ENCODE measurements at regions of chr3 and their contacts with region 1.

Region 1: GRCh38 chr3:99817437-99818240 is at the start of gene CMSS1:
- DNase-seq: peak; percentile 95
- H3K4me3 Mint-ChIP-seq: peak within 1 kb of the TSS; percentile 98
- H3K27ac Mint-ChIP-seq: peak within 1 kb of the TSS; percentile 98
- H3K4me1 Mint-ChIP-seq: peaks cover 39% of the 10 kb centered on the region
- H3K27me3 Mint-ChIP-seq: no peaks in the 10 kb centered on the region
- total RNA-seq, gene CMSS1: 95.8 to 106 TPM

Region 2: GRCh38 chr3:99875929-99876841 is 58.5 kb after region 1 on chr3:
- CTCF ChIA-PET with region 1: no interaction called
- intact Hi-C with region 1: loop called (anchors 2 kb)
- DNase-seq: peak; percentile 67
- H3K4me3 Mint-ChIP-seq: peak overlapping the region; percentile 65
- H3K27ac Mint-ChIP-seq: no peak overlapping the region
- H3K4me1 Mint-ChIP-seq: peaks cover 13% of the 10 kb centered on the region
- H3K27me3 Mint-ChIP-seq: no peaks in the 10 kb centered on the region

Region 3: DNA sequence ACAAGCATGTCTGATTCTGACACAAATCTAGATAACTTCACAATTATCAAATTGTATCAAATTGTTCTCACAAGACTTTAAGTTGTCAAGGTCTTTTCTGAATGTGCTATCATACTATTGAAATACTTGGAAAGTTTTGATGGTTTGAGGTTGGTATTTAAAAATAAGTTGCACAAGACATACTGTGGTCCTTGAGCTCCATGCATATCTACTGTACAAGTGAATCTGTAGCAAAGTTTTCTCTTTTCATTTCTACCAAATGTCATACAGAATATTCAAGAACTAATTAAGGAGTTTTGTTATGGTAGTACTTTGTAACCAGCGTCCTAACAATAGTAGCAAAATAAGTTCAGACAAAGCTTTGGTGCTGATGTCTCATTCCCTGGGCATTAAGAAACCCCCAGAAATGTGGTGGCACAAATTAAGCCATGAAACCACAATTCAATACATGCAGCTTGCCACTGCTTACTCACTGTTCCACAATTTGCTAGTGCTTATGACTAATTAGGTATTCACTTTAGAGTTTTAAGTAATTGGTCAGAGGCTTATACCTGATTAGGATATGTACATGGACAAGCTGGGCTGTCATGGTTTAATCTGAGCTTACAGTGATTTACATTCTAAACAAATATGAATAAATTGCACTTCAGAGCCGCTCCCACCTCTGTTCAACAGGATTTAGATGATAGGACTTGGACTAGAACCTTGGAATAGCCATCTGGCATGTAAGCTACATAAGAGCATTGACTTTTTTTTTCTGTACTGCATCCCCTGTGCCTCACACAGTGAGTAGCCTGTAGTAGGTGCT is 452.0 kb after region 1 on chr3:
- CTCF ChIA-PET with region 1: no interaction called
- intact Hi-C with region 1: loop called (anchors 1 kb)
- DNase-seq: peak; percentile 43
- H3K4me3 Mint-ChIP-seq: no peak overlapping the region
- H3K27ac Mint-ChIP-seq: peak overlapping the region; percentile 0
- H3K4me1 Mint-ChIP-seq: peaks cover 51% of the 10 kb centered on the region
- H3K27me3 Mint-ChIP-seq: no peaks in the 10 kb centered on the region